Common myeloid progenitor, CD34-positive (primary cell): ENCODE measurements at regions of chr5 and their contacts with region 1.

Region 1: DNA sequence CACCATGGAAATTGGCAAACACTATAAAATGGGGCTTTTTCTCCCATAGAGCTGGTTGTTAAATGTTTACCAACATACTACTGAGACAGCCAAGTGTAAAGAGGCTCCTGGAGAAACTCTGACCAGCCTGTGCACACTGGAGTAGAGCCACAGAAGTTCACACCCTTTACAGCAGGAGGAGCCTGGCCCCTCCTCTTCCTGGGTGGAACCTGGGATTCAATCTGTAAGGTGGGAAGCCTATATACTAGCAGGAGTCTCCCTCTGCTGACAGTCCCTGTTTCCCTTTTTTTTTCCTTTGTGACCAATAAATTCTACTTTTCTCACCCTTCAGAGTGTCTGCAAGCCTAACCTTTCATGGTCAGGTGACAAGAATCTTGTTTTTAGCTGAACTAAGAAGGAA is 10.4 kb upstream of the SLC30A5 start:
- DNase-seq: no peak
- H3K4me3 ChIP-seq: no peak overlapping the region
- H3K27ac ChIP-seq: no peak overlapping the region
- H3K4me1 ChIP-seq: peaks cover 0 to 15% (median 3%) of the 10 kb centered on the region in 4 experiments
- H3K27me3 ChIP-seq: no peaks in the 10 kb centered on the region

Region 2: DNA sequence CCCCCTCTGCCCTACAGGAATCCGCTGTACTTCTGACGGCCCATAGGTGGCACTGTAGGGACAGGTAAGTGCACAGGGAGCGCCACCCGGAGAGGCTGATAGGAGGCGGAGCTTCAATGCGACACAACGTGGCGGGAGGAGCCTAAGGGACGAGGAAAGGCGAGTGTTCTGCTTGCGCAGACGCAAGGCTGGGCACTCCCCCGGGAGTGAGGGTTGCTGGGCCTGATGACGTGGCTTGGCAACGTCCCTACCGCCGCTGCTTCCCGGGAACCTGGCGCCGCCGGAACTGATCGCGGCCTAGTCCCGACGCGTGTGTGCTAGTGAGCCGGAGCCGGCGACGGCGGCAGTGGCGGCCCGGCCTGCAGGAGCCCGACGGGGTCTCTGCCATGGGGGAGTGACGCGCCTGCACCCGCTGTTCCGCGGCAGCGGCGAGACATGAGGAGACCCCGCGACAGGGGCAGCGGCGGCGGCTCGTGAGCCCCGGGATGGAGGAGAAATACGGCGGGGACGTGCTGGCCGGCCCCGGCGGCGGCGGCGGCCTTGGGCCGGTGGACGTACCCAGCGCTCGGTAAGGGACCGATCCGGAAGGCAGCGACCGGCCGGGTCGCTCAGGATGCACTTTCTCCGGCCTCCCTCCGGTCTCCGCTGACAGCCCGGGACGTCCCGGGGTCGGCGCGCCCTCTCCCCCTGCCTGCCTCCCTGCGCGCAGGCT is 10.5 kb after region 1 on chr5 and contains the start of gene SLC30A5:
- CTCF ChIA-PET with region 1: interaction called, 17 read pairs
- POLR2A ChIA-PET with region 1: interaction called, 4 read pairs
- DNase-seq: peak; percentile 99 to 100 (median 100)
- H3K4me3 ChIP-seq: peak within 1 kb of the TSS; percentile 71 to 97 (median 91)
- H3K27ac ChIP-seq: peak within 1 kb of the TSS; percentile 85 to 93
- H3K4me1 ChIP-seq: peaks cover 4 to 13% (median 8%) of the 10 kb centered on the region in 4 experiments
- H3K27me3 ChIP-seq: no peaks in the 10 kb centered on the region

Region 3: DNA sequence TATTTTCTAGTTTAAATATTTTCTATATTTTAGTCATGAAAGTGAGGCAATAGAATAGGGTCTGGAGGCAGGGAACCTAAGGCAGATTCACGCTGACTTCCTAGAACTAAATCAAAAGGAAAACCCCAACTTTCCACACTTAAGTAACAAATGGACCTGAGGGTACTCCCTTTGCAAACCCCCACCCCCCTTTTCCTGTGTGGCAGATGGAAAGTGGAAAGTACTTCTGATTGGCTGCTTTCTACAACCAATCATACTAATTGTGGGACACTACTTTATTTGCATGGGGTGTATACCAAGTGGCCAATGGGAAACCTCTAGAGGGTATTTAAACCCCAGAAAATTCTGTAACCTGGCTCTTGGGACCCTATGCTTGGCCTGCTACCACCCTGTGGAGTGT is 101.2 kb after region 1 on chr5:
- CTCF ChIA-PET with region 1: no interaction called
- POLR2A ChIA-PET with region 1: no interaction called
- DNase-seq: no peak
- H3K4me3 ChIP-seq: no peak overlapping the region
- H3K27ac ChIP-seq: no peak overlapping the region
- H3K4me1 ChIP-seq: peaks cover 0 to 8% (median 6%) of the 10 kb centered on the region in 4 experiments
- H3K27me3 ChIP-seq: no peaks in the 10 kb centered on the region